Cardiac septum (tissue), 1 donor: ENCODE measurements at regions of chr2 and their contacts with region 1.

Region 1: DNA sequence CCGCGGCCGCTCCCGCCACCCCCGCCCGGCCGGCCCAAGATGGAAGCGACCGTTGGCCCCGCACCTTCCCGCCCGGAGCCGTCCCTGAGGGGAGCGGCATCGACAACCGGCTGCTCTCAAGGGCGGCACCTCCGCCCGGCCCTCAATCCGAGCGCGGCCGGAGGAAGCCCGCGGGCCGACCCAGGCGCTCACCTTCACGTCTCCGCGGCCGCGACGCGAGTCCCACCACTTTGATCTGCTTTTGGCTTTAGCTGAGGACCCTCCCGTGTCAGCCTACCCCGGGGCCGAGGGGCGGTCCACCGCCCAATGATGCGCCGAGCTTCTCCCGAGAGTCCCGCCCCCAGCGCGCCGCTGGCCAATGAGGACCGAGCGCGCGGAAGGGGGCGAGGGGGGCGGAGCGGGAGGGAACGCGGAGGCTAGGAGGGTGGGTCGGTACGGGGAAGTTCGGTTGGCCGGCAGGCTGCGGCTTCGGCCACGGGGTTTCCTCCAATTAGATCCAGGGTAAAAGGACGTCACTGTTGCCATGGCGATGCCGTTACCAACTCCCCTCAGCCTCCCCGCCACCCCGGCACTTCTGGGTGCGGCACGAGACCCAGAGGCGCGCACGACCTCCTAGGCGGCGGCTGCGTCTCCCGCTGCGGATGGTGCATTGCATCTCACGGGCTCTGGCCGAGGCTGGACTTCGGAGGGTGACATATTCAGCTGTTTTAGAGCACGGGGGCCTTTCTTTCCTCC is at the start of gene YWHAQ:
- DNase-seq: peak; percentile 98
- total RNA-seq, gene YWHAQ: 299 TPM

Region 2: DNA sequence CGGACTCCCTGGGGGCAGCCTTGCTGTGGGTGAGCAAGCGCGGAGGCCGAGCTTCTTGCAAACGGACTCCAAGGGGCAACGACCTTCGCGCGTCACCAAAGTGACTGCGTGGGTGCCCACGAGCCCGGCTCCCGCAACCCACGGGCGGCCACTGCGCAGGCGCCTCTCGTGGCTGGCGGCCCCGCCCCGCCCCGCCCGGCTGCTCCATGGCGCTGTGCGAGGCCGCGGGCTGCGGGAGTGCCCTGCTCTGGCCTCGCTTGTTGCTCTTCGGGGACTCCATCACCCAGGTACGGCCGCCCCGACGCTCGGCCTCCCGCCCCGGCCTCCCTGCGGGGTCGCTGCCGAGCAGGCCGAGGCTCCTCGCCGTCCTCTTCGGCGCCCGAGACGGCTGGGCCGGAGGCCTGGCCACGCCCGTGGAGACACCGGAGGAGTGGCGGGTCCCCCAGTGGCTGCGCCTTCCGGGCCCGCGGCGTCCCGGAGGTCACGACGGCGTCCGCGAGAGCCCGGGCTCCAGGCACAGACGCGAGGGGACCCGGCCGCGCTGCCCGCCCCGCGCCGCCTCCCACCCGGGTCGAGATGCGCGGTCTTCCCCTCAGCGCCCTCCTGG is 156.5 kb before region 1 on chr2 and contains the start of gene IAH1:
- intact Hi-C with region 1: loop called (anchors 5 kb)
- DNase-seq: peak; percentile 88
- total RNA-seq, gene IAH1: 92.0 TPM

Region 3: DNA sequence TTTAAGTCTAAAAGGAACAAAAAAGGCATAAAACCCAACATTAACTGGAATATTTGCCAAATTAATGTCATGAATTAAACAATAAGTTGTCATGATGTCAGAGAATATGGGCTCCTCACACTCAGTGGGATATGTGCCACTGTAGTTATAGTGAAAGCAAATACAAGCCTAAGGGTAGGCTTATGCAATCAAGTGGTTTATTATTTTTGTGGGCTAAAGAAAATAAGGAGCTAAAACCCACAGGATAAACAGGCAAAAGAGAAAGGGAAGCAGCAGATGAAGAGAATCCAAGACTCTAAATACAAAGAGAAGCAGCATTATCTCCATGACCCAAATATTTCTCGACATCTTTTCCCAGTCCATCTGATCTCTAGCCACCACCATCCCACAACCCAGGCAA is 17.6 kb before region 1 on chr2:
- intact Hi-C with region 1: loop called (anchors 2 kb)
- DNase-seq: no peak

Region 4: DNA sequence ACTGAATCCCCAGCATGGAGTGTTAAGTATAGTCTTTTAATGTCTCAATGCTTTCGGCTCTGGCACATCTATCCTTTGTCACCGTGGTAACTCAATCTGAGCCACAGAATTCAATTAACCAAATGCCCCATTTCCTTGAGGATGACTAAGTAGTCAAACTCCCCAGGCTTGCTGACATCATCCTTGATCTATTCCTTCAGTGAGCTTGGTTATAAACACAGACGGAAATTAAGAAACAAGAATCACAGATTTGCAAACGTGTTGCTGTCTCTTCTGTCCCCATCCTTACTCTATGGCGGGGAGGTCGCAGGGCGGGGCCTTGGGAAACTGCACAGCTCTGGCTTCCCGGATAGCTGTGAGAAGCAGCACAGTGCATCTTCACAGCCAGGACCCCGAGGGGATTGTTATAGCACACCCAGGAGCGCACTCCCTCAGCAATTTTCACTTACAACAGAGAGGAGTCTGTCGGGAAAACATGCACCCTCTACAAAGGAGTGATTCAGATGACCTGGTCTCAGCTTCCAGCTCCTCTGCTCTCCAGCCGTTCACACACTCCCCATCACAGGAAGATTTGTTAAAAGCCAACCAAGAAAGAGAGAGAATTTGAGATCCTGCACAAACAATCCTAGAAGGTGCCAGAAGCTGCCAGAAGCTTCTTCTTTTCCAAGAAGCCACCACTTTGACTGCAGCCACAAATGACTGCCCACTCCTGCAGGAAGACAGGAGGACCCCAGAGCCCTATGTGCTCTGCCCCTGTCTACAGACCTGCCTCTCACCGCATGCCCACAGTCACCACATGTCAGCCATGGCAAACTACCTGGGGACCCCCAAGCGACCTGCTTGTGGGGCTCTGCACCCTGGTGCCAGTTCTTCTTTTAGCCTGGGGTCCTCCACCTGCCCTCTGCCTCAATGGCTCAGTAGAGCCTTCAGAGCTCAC is 44.8 kb after region 1 on chr2:
- intact Hi-C with region 1: no loop called
- DNase-seq: no peak

Region 5: GRCh38 chr2:9693211-9693520 is 62.2 kb after region 1 on chr2:
- intact Hi-C with region 1: loop called (anchors 2 kb)
- DNase-seq: peak; percentile 85

Region 6: GRCh38 chr2:9757501-9758264 is 126.8 kb after region 1 on chr2:
- intact Hi-C with region 1: loop called (anchors 2 kb)
- DNase-seq: peak; percentile 87